ENCODE measurements at regions of chr12 and their contacts with region 1.

Region 1: GRCh38 chr12:111451649-111452129 is 46.0 kb downstream of the SH2B3 start:
- DNase-seq: no peak
- H3K4me3 ChIP-seq: no peak overlapping the region
- CTCF ChIP-seq: peak; percentile 41

Region 2: DNA sequence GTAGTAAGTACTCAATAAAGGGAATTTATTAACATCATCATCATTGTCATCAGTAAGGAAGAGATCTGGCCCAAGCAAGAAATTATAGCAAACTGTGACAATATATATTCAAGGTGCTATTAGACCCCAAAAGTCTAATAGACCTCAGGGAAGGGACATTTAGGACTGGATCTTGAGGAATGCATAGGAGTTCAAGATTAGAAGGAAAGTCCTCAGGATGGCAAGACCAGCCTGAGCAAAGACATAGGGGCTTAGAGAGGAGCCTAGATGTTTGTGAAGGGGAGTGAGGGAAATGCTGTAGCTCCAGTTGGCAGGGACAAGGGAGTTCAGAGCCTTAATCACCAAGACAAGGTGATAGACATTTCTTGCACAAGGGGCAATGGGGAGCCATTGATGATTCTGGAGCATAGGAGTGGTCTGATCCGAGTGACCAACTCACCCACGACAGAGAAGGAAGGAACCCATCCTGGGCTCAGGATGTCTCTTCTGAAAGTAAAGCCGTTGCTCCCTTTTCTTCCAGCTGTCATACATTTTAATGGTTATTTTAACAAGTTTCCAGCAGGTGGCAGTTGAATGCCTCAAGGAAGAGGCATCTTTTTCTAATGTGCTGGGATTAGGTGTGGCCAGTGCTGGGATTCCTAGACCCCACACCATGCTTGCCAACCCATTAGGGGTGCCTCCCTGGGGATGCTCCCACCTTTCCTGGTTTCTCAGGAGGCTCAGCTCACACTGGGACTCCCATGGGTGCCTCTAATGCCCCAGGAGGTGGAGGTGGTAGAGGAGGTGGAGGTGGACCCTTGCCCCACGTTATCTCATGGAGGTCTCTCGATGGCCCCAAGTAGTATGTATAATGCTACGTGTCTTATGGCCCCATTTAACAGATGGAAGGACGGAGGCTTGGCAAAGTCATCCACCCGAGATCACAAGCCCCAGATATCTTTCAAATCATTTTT is 120.6 kb before region 1 on chr12:
- CTCF ChIA-PET with region 1: interaction called, 26 read pairs
- POLR2A ChIA-PET with region 1: interaction called, 4 read pairs
- DNase-seq: no peak
- H3K4me3 ChIP-seq: no peak overlapping the region
- CTCF ChIP-seq: no peak

Region 3: GRCh38 chr12:111405149-111405860 is 46.4 kb before region 1 on chr12:
- CTCF ChIA-PET with region 1: interaction called, 899 read pairs
- POLR2A ChIA-PET with region 1: interaction called, 3 read pairs
- DNase-seq: peak; percentile 33
- H3K4me3 ChIP-seq: peak overlapping the region; percentile 95
- CTCF ChIP-seq: peak; percentile 59

Region 4: DNA sequence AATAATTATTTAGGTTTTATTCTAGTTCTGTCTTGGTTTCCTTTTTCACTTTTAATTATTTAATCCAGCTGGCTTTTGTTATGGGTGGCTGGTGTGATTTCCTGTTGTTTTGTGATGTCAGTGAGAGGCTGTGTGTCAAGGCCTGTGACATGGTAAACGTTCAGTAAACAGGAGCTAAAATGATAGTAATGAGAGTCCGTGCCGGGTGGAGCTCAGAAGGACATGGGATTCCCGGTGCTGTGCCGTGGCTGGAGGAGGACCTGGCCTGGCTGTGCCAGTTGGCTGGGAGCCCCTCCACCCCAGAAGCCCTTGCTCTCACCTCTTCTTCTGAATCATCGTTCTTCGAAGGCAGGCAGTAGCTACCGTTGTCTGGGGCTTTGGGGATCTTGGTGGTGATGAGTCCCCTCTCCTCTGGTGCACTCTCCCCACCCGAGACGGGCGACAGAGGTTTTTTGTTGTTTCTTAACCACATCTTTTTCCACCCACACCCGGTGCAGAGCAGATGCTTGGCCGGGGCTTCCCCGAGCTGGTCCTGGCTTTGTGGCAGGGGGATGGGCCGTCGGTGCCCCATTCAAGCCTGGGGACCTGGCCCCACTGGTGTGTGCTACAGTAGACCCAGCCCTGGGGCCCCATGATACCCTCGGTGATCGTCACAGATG is 16.9 kb before region 1 on chr12:
- CTCF ChIA-PET with region 1: interaction called, 158 read pairs
- POLR2A ChIA-PET with region 1: interaction called, 5 read pairs
- DNase-seq: no peak
- H3K4me3 ChIP-seq: peak overlapping the region; percentile 29
- CTCF ChIP-seq: no peak

Region 5: DNA sequence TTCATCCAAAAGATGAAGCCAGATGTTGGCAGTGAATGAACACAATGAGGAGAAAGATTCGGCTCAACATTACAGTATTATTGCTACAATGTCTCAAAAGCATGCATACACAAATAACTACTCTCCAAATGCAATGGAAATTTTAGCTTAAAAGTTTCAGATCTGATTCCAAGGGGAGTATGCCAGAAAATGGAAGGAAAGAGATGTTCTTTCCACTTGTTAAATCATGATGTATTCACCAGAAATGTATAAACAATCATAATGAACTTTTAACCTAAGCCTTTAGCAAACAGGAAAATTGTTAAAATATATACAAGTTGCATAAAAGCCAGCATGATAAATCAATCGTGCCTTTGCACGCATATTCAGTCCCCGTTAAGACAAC is 16.2 kb after region 1 on chr12:
- CTCF ChIA-PET with region 1: interaction called, 75 read pairs
- POLR2A ChIA-PET with region 1: no interaction called
- DNase-seq: no peak
- H3K4me3 ChIP-seq: no peak overlapping the region
- CTCF ChIP-seq: no peak

Region 6: DNA sequence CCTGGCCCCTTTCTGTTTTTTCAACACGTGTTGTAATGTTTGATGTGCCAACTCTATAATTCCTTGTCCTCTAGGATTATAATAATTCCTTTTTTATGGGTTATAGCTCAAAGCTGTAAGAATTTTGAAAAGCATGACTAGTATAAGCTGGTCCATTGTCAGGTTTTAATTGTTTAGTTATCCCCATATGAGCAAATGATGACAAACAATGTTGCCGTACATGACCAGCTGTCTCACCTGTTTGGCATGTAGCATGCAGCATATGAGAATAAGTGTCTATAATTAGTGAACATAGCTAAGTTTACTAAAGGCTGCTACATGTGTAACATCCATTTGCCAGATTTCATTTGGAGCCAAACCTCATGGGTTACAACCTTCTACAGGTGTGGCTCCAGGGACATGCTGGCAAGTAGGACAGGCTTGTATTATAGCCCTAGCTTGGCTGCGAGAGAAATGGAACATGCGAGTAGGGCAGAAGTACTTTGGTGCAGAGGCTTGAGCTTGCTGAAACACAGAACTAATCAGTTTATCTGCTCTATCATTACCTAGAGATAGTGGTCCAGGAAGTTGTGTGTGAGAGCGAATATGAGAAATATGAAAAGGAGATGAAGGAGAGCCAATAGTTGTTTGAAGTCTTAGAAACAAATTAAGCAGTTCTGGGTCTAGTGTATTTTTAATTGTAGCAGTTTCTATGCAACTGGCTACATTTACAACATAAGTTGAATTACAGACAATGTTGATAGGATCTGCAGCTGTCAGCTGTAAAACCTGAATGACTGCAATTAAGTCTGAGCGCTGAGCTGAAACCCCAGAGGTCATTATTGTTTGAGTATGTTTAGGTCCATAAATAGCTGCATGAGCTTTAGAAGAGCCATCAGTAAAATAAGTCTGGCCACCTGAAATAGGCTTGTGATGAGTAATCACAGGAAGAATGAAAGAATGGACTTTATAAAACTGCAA is 367.8 kb after region 1 on chr12:
- CTCF ChIA-PET with region 1: no interaction called
- POLR2A ChIA-PET with region 1: no interaction called
- DNase-seq: no peak
- H3K4me3 ChIP-seq: no peak overlapping the region
- CTCF ChIP-seq: no peak

Measured in AG04449 (cell line).